Gastrocnemius medialis (tissue), 4 donors: ENCODE measurements at regions of chr12 and their contacts with region 1.

Region 1: DNA sequence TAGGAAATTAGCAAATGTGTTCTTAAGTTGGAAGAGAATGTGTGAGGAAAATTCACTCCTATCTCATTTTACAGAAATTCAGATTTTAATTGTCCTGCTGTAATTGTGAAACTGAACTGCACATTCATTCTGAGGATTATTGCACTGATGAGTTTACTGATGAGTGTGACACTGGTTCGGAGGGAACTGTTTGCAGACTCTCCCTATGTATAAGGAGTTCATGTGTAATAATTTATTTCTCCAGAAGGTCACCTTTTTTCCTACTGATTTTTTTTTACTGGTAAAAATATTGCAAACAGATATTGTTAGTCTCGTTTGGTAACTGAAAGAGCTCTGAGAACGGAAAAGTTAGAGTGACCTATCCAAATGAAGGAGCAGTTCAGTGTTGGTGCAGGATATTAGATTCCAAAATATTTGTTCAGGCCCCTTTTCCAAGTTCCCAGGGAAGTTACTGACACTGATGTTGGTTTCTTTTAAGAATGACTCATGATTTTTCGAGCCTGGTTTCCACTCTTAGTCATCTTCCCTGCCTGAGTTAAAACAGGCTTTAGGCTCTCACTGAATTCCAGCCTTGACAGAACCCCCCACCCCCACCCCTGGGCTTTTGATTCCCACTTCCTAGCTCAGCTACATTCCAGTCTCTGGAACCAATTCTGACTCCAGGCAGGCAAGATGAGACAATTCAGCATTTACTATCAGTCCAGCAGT is 18.4 kb downstream of the ANO6 start:
- DNase-seq: peak in 1 of 2 donors; percentile 42
- ATAC-seq: peak; percentile 65 to 76
- H3K4me3 ChIP-seq: peak overlapping the region; percentile 5 to 21 (median 18)
- H3K27ac ChIP-seq: peak overlapping the region; percentile 90 to 97 (median 93)
- H3K4me1 ChIP-seq: peaks cover 57 to 62% of the 10 kb centered on the region in 2 donors
- H3K27me3 ChIP-seq: no peaks in the 10 kb centered on the region
- CTCF ChIP-seq: no peak
- POLR2A ChIP-seq: no peak

Region 2: GRCh38 chr12:45290204-45290580 is 55.9 kb after region 1 on chr12:
- in situ Hi-C with region 1: no loop called
- intact Hi-C with region 1: loop called (anchors 2 kb)
- DNase-seq: peak; percentile 48 to 65
- ATAC-seq: peak; percentile 93
- H3K4me3 ChIP-seq: peak overlapping the region in 3 of 4 donors; percentile 13 to 27 (median 21)
- H3K27ac ChIP-seq: peak overlapping the region; percentile 89 to 93 (median 90)
- H3K4me1 ChIP-seq: peaks cover 39 to 40% of the 10 kb centered on the region in 2 donors
- H3K27me3 ChIP-seq: no peaks in the 10 kb centered on the region
- CTCF ChIP-seq: no peak
- POLR2A ChIP-seq: no peak

Region 3: GRCh38 chr12:45368841-45369489 is 134.7 kb after region 1 on chr12:
- in situ Hi-C with region 1: no loop called
- intact Hi-C with region 1: no loop called
- DNase-seq: no peak
- ATAC-seq: no peak
- H3K4me3 ChIP-seq: no peak overlapping the region
- H3K27ac ChIP-seq: no peak overlapping the region
- H3K4me1 ChIP-seq: peaks cover 0 to 5% of the 10 kb centered on the region in 2 donors
- H3K27me3 ChIP-seq: no peaks in the 10 kb centered on the region
- CTCF ChIP-seq: no peak
- POLR2A ChIP-seq: no peak